Breast epithelium (tissue), 4 donors: ENCODE measurements at regions of chr5 and their contacts with region 1.

Region 1: DNA sequence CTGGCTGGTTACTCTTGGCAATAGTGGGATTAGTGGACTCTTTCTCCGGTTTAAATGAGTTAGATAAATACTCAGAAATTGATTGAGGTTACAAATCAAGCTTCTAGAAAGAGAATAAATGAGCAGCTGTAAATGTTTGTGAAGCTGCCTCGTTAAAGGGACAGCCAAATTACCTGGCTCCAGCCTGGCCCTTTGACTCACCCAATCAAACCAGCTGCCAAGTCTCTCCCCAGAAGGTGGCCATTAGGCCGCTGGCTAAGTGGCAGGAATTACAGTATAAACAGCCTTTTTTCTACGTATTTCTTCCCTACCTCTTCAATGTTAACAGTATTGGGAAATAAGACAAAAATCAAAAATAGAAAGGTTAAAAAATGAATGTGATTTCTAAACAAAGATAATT is 46.0 kb upstream of the SRFBP1 start:
- DNase-seq: no peak
- H3K4me3 ChIP-seq: no peak overlapping the region
- H3K27ac ChIP-seq: no peak overlapping the region
- H3K4me1 ChIP-seq: no peaks in the 10 kb centered on the region
- H3K27me3 ChIP-seq: no peaks in the 10 kb centered on the region
- CTCF ChIP-seq: no peak
- POLR2A ChIP-seq: no peak

Region 2: GRCh38 chr5:121399879-121400278 is 515.9 kb before region 1 on chr5:
- intact Hi-C with region 1: loop called (anchors 5 kb)
- DNase-seq: no peak
- H3K4me3 ChIP-seq: no peak overlapping the region
- H3K27ac ChIP-seq: no peak overlapping the region
- H3K4me1 ChIP-seq: no peaks in the 10 kb centered on the region
- H3K27me3 ChIP-seq: no peaks in the 10 kb centered on the region
- CTCF ChIP-seq: no peak
- POLR2A ChIP-seq: no peak

Region 3: DNA sequence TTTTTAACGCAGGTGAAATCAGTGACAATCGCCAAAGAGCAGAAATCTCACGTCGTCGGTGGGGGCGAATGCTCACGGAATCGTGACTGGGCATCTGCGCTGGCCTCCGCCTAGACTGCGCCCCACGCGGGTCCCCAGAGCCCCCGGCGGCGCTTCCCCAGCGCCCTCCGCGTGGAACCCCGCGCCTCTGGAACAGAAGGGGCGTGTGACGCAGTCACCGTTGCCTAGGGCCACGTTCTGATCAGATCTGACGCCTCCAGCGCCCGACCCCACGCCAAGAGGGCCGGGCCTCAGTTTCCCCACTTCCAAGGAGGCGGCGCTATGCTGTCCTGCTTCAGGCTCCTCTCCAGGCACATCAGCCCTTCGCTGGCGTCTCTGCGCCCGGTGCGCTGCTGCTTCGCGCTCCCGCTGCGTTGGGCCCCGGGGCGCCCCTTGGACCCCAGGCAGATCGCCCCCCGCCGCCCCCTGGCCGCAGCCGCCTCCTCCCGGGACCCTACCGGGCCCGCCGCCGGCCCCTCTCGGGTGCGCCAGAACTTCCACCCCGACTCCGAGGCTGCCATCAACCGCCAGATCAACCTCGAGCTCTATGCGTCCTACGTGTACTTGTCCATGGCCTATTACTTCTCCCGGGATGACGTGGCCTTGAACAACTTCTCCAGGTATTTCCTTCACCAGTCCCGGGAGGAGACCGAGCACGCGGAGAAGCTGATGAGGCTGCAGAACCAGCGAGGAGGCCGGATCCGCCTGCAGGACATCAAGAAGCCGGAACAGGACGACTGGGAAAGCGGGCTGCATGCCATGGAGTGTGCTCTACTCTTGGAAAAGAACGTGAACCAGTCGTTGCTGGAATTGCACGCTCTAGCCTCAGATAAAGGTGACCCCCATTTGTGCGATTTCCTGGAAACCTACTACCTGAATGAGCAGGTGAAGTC is 63.9 kb before region 1 on chr5 and contains the start of gene FTMT:
- intact Hi-C with region 1: no loop called
- DNase-seq: no peak
- H3K4me3 ChIP-seq: no peak within 1 kb of the TSS
- H3K27ac ChIP-seq: no peak within 1 kb of the TSS
- H3K4me1 ChIP-seq: no peaks in the 10 kb centered on the region
- H3K27me3 ChIP-seq: no peaks in the 10 kb centered on the region
- CTCF ChIP-seq: no peak
- POLR2A ChIP-seq: no peak
- total RNA-seq, gene FTMT: 0.44 TPM in 1 of 3 donors, not detected in the others